Endothelial cell of umbilical vein (primary cell): ENCODE measurements at regions of chr5 and their contacts with region 1.

Region 1: DNA sequence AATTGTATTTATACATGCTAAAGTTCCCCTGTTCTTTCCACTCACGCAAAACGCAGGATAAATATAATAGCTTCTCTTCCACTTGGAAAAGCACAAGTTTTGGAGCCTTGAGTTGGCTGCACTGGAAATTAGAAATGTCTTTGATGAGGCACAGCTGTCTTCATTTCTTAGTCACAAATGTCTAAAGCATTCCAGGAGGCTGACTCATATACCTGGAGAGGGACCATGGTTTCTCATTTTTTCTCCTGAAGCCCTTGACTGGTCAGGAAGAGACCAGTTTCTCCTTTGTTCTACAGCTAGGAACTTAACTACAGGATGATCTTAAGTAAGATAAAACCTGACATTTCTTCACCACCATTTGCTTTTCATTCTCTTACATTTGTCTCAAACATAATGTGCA is 16.2 kb downstream of the MTX3 start:
- DNase-seq: no peak
- H3K4me3 ChIP-seq: no peak overlapping the region
- H3K27ac ChIP-seq: no peak overlapping the region
- H3K4me1 ChIP-seq: peaks cover 5% of the 10 kb centered on the region
- H3K27me3 ChIP-seq: no peaks in the 10 kb centered on the region
- CTCF ChIP-seq: no peak
- POLR2A ChIP-seq: no peak

Region 2: GRCh38 chr5:79936002-79936645 is 38.8 kb before region 1 on chr5:
- CTCF ChIA-PET with region 1: no interaction called
- POLR2A ChIA-PET with region 1: no interaction called
- dilution Hi-C with region 1: no loop called
- intact Hi-C with region 1: no loop called
- DNase-seq: no peak
- H3K4me3 ChIP-seq: no peak overlapping the region
- H3K27ac ChIP-seq: no peak overlapping the region
- H3K4me1 ChIP-seq: no peaks in the 10 kb centered on the region
- H3K27me3 ChIP-seq: no peaks in the 10 kb centered on the region
- CTCF ChIP-seq: no peak
- POLR2A ChIP-seq: no peak

Region 3: GRCh38 chr5:79990598-79991507 is 16.0 kb after region 1 on chr5 and contains the start of gene MTX3:
- CTCF ChIA-PET with region 1: interaction called, 10 read pairs
- POLR2A ChIA-PET with region 1: no interaction called
- dilution Hi-C with region 1: no loop called
- intact Hi-C with region 1: no loop called
- DNase-seq: peak; percentile 80
- H3K4me3 ChIP-seq: peak within 1 kb of the TSS; percentile 60 to 71 (median 66)
- H3K27ac ChIP-seq: peak within 1 kb of the TSS; percentile 32
- H3K4me1 ChIP-seq: peaks cover 13% of the 10 kb centered on the region
- H3K27me3 ChIP-seq: peaks cover 0 to 2% of the 10 kb centered on the region in 2 experiments
- CTCF ChIP-seq: no peak
- POLR2A ChIP-seq: peak; percentile 49
- total RNA-seq, gene MTX3: 8.3 and 9.4 TPM in 2 replicates